ENCODE measurements at regions of chr19 and their contacts with region 1.

Region 1: DNA sequence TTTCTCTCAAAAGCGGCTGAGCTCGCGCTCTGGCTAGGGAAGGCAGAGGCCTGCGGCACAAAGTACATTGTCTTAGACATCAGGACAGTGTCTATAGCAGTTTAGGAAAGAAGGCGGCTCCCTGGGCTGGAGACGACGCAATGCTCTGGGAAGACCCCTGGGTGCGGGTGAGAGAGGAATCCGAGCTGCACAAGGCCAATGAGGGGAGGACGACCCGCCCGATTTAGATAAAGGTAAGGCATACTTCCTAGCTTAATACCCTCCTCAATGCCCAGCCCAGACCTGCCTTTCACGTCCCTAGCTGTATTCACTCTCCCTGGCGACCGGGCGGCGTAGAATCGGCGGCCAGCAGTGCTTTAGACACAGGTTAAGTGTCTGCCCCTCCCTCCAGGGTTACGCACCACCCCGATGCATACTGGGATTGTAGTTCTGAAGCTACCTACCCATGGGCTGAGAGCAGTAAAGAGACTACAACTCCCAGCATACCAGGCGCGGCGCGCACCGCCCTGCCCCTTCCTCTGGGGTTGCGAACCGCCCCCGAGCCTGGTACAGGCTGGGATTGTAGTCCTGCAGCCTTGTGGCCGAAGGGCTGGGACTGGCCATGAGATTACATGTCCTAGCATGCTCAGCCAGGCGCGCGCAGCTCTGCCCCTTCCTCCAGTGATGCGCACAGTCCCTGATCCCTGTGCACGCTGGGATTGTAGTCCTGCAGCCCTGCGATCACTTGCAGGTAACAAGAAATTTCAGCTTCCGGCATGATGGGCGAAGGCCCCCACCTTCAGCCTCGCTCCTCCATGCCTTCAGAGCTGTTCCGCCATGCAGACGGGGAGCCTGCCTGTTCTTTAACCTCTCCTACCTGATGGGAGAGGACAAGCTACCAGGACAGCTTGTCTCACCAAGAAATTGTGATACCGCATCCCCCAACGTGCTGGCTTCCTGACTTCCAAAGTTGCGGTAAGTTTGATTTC is 43.4 kb upstream of the ZNF14 start:
- DNase-seq: peak; percentile 98
- ATAC-seq: peak; percentile 100
- H3K4me3 ChIP-seq: peak overlapping the region; percentile 85
- H3K27ac ChIP-seq: 0 out of 2 replicates have a peak overlapping the region, but pooled peaks have one; percentile 2
- H3K4me1 ChIP-seq: peaks cover 13% of the 10 kb centered on the region
- H3K27me3 ChIP-seq: no peaks in the 10 kb centered on the region
- CTCF ChIP-seq: no peak

Region 2: DNA sequence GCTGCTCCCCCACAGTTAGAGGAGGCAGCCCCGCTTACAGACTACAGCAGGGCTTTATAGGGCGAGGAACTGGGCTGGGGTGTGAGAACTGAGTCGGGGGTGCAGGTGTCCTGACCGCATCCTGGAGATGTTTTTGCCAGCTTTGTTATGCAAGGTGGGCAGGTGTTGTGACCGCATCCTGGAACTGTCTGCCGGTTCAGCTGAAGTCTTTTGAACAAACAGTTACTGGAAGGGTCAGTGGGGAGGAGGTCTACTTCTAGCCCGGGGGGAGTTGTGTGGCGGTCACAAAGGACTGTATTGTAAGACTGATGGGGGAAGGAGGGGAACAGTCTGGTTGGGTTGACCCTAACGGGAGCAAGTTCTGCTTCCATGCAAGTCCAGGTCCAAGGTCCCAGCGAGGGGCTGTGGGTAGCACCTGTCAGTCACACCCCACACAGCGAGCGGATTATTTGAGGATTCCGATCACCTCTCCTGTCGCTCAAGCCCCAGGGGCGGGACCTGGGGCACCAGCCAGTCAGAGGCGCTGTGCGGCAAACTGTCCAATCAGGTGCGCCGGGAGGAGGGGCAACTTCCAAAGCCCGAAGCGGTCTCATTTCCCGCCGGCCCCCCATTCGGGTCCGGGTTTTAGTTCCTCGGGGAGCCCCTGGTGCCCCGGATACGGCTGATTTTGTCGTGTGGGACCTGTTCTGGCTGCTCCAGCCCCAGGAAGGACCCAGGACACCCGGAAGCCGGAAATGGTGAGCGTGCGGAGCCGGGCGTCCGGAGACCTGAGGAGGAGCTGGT is 107.9 kb before region 1 on chr19 and contains the start of gene ZNF101:
- CTCF ChIA-PET with region 1: no interaction called
- POLR2A ChIA-PET with region 1: no interaction called
- intact Hi-C with region 1: loop called (anchors 1 kb)
- DNase-seq: peak; percentile 95
- ATAC-seq: peak; percentile 76
- H3K4me3 ChIP-seq: peak within 1 kb of the TSS; percentile 86
- H3K27ac ChIP-seq: peak within 1 kb of the TSS; percentile 41
- H3K4me1 ChIP-seq: peaks cover 9% of the 10 kb centered on the region
- H3K27me3 ChIP-seq: no peaks in the 10 kb centered on the region
- CTCF ChIP-seq: no peak
- total RNA-seq, gene ZNF101: 11.0 and 11.3 TPM in 2 replicates

Region 3: DNA sequence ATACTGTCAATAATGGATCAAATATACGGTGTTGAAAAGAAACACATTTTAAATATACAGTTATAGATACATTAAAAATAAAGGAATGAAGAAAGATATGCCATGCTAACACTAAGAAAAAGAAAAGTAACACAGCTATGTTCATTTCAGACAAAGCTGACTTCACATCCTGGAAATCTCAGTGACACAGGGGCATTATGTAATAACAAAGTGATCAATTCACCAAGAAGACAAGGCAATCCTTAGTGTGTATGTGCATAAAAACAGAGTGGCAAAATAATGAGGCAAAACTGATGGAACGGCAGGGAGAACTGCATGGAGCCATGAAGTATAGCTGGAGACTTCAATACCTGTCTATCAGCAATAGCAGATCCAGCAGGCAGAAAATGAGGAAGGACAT is 56.5 kb before region 1 on chr19:
- CTCF ChIA-PET with region 1: no interaction called
- POLR2A ChIA-PET with region 1: no interaction called
- intact Hi-C with region 1: no loop called
- DNase-seq: no peak
- ATAC-seq: no peak
- H3K4me3 ChIP-seq: no peak overlapping the region
- H3K27ac ChIP-seq: no peak overlapping the region
- H3K4me1 ChIP-seq: no peaks in the 10 kb centered on the region
- H3K27me3 ChIP-seq: no peaks in the 10 kb centered on the region
- CTCF ChIP-seq: no peak

Region 4: GRCh38 chr19:19732579-19733501 is 43.5 kb before region 1 on chr19 and contains the start of gene ZNF14:
- CTCF ChIA-PET with region 1: no interaction called
- POLR2A ChIA-PET with region 1: no interaction called
- intact Hi-C with region 1: loop called (anchors 2 kb)
- DNase-seq: peak; percentile 97
- ATAC-seq: peak; percentile 100
- H3K4me3 ChIP-seq: peak within 1 kb of the TSS; percentile 91
- H3K27ac ChIP-seq: no peak within 1 kb of the TSS
- H3K4me1 ChIP-seq: no peaks in the 10 kb centered on the region
- H3K27me3 ChIP-seq: no peaks in the 10 kb centered on the region
- CTCF ChIP-seq: peak; percentile 26; the same call in 1 of the 2 replicates
- total RNA-seq, gene ZNF14: 2.4 and 3.0 TPM in 2 replicates

Region 5: DNA sequence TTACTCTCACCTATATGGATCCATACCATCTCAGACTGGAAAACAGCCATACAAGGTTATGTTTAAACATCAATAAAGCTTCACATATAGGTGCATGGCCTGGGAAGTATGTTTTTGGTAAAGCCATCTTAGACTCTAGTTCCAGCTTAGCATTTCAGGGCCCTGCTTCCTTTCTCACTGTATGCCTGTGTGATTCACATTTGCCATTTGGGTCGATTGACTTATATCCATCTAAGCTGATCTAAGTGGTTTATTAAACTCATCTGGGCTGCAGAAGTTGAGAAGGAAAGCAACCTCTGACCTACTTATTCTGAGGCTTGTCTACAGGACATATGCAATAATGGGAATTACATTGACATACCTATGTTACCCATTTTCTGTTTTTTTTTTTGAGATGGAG is 11.7 kb after region 1 on chr19:
- CTCF ChIA-PET with region 1: no interaction called
- POLR2A ChIA-PET with region 1: no interaction called
- intact Hi-C with region 1: no loop called
- DNase-seq: no peak
- ATAC-seq: no peak
- H3K4me3 ChIP-seq: no peak overlapping the region
- H3K27ac ChIP-seq: no peak overlapping the region
- H3K4me1 ChIP-seq: no peaks in the 10 kb centered on the region
- H3K27me3 ChIP-seq: no peaks in the 10 kb centered on the region
- CTCF ChIP-seq: no peak

Measured in PC-3 (cell line).